ENCODE measurements at regions of chr7 and their contacts with region 1.

Region 1: GRCh38 chr7:43071604-43072003 is 40.8 kb upstream of the HECW1 start:
- DNase-seq: peak; percentile 73
- H3K4me3 ChIP-seq: peak overlapping the region; percentile 44
- H3K27ac ChIP-seq: peak overlapping the region; percentile 98
- H3K4me1 ChIP-seq: peaks cover 79% of the 10 kb centered on the region
- CTCF ChIP-seq: peak; percentile 85

Region 2: DNA sequence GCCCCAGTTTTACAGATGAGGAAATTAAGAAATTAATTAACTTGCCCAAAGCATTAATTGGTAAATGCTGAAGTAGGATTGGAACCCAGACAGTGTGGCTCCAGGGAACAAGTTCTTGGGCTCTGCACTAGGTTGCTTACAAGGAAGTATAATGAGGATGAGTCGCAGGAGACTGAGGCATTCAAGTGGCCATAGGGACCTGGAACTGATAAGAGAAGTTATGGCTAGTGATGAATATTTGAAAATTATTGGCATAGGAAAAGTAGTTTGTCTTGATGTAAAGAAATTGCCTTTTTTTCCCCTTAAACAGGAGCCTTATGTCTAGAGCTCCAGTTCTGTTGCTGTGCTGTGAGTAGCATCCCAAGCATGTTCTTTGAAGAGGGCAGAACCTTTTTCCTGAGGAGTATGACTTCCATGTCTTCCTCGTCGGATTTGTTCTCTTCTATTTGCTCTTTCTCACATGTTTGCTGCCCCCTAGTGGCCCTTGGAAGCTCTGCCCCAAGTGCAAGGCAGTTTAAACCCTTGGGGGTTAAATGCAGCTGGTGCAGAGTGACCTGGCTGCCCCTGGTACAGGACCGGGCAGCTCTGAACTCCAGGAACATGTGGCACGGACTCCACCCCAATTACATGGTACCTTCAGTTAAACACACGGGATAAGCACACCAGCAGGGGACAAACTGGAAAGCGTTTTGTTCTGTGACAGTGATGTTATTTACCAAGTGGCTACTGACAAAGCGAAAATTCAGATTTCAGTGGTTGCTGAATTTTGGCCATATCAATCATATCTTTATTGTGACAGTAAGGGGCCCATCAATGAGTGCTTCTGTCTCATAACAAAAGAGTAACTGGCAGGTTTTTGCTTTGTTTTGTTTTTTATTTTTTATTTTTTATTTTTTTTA is 189.6 kb after region 1 on chr7:
- CTCF ChIA-PET with region 1: no interaction called
- POLR2A ChIA-PET with region 1: no interaction called
- intact Hi-C with region 1: loop called (anchors 2 kb)
- DNase-seq: peak; percentile 86
- H3K4me3 ChIP-seq: no peak overlapping the region
- H3K27ac ChIP-seq: no peak overlapping the region
- H3K4me1 ChIP-seq: peaks cover 3% of the 10 kb centered on the region
- CTCF ChIP-seq: peak; percentile 98